Prostate gland (tissue), 2 donors: ENCODE measurements at regions of chr4 and their contacts with region 1.

Region 1: GRCh38 chr4:185471235-185472102 is at the start of gene CCDC110:
- DNase-seq: peak; percentile 95
- H3K4me3 ChIP-seq: peak within 1 kb of the TSS; percentile 63 to 70
- H3K27ac ChIP-seq: peak within 1 kb of the TSS; percentile 74 to 81
- H3K4me1 ChIP-seq: no peaks in the 10 kb centered on the region
- H3K27me3 ChIP-seq: no peaks in the 10 kb centered on the region
- CTCF ChIP-seq: peak; percentile 70 to 85 (median 75)
- POLR2A ChIP-seq: peak; percentile 42
- total RNA-seq, gene CCDC110: 2.8 to 10.3 TPM

Region 2: DNA sequence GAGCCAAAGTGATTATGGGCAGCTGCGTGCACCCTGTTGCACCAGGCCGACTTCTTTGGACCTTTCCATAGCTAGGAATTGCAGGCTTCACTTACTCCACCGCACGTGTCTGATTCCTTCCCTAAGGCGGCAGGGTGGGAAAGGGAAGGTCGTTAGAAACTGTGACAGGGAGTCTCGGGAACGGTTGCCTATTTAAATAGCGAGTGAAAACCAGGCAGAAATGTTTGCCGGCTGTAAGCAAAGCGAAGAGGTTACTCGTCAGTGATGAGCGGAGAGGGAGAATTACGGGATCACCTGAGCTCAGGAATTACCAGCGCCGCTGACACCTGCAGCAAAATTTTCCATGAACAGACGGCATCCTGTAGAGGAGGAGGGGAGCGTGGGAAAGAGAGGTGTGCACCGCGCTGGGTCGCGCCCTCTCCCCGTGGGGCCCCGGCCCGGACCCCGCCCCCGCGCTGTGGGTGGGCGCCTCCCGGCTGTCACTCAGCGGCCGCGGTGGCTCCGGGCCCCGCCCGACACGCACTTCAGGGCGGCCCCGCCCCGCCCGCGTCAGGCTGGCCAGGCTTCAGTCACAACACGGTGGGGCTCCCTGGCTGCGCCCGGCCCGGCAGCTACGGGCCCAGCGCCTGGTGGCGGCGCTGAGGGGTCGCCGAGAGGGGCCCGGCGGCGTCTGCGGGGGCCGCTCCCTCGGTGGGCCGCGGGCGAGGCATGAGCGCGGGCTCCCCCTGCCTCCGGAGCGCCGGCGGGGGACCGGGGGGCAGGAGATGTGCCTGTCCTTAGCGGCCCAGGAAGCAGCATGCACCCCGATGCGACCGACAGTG is 262.2 kb before region 1 on chr4 and contains the start of gene SNX25:
- intact Hi-C with region 1: loop called (anchors 5 kb)
- DNase-seq: peak; percentile 89
- H3K4me3 ChIP-seq: peak within 1 kb of the TSS; percentile 82
- H3K27ac ChIP-seq: peak within 1 kb of the TSS; percentile 85 to 95
- H3K4me1 ChIP-seq: peaks cover 7% of the 10 kb centered on the region
- H3K27me3 ChIP-seq: no peaks in the 10 kb centered on the region
- CTCF ChIP-seq: peak in 3 of 4 experiments; percentile 11 to 54 (median 52)
- POLR2A ChIP-seq: peak; percentile 96
- total RNA-seq, gene SNX25: 26.4 to 49.5 TPM

Region 3: DNA sequence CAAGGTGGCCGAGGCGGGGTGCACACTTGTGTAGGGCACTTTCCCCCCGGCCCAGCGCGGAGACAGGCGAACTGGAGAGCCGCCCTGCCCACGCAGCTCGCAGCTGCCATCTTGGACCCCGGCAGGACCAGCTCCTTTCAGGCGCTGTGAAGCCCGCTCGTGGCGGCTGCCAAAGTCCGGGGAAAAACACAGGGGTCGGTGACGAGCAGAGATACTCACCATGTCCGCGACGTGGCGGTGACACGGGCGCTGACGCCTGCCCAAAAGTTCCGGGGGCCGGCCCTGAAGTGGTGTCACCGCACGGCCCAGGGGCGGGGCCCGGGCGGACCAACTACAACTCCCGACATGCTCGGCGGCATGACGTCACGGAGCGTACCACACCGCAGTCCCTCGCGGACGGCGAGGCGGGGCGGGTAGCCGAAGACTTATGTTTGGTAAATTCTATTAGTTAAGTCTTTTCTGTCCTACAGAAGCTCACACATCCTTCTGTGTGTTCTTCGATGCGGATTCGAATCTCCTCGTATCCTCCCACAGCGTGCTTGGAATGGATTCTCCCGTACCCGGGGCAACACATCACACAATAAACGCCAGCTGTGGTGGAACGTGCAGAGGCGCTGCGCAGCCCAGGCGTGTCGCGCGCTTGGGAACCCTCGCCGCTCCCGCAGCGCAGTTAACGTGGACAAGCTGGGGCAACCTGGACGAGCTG is 45.7 kb before region 1 on chr4 and contains the start of gene UFSP2:
- intact Hi-C with region 1: loop called (anchors 5 kb)
- DNase-seq: peak; percentile 81
- H3K4me3 ChIP-seq: peak within 1 kb of the TSS; percentile 65 to 76
- H3K27ac ChIP-seq: peak within 1 kb of the TSS; percentile 94 to 95
- H3K4me1 ChIP-seq: no peaks in the 10 kb centered on the region
- H3K27me3 ChIP-seq: no peaks in the 10 kb centered on the region
- CTCF ChIP-seq: peak in 3 of 4 experiments; percentile 5 to 19 (median 8)
- POLR2A ChIP-seq: peak; percentile 64
- total RNA-seq, gene UFSP2: 32.1 to 42.7 TPM

Region 4: GRCh38 chr4:185504098-185505047 is 32.9 kb after region 1 on chr4:
- intact Hi-C with region 1: loop called (anchors 5 kb)
- DNase-seq: peak; percentile 35
- H3K4me3 ChIP-seq: peak overlapping the region in 1 of 2 donors; percentile 1
- H3K27ac ChIP-seq: peak overlapping the region; percentile 26 to 49
- H3K4me1 ChIP-seq: no peaks in the 10 kb centered on the region
- H3K27me3 ChIP-seq: no peaks in the 10 kb centered on the region
- CTCF ChIP-seq: no peak
- POLR2A ChIP-seq: no peak

Region 5: DNA sequence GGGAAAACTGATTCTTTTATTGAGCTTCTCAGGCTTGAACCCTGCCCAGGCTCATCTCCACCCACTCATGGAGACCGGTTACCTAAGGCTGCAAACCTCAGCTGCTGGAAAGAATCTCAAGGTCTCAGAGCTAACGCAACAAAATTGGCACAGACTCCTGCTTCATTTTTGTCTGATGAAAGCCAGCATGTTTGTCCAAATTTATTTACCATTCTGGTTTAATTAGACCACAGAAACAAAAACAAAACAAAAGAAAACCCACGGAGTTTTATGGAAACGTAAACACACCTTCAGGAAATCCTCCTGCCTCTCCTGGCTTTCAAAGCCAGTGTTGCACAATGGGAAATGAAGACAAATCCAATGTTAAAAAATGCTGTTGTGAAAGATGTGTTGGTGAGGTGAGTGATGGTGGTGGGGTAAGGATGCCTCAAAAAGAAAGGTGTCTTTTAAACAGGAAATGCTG is 120.2 kb after region 1 on chr4:
- intact Hi-C with region 1: loop called (anchors 2 kb)
- DNase-seq: peak; percentile 32
- H3K4me3 ChIP-seq: no peak overlapping the region
- H3K27ac ChIP-seq: peak overlapping the region; percentile 40 to 46
- H3K4me1 ChIP-seq: no peaks in the 10 kb centered on the region
- H3K27me3 ChIP-seq: no peaks in the 10 kb centered on the region
- CTCF ChIP-seq: peak in 1 of 4 experiments; percentile 27
- POLR2A ChIP-seq: no peak

Region 6: DNA sequence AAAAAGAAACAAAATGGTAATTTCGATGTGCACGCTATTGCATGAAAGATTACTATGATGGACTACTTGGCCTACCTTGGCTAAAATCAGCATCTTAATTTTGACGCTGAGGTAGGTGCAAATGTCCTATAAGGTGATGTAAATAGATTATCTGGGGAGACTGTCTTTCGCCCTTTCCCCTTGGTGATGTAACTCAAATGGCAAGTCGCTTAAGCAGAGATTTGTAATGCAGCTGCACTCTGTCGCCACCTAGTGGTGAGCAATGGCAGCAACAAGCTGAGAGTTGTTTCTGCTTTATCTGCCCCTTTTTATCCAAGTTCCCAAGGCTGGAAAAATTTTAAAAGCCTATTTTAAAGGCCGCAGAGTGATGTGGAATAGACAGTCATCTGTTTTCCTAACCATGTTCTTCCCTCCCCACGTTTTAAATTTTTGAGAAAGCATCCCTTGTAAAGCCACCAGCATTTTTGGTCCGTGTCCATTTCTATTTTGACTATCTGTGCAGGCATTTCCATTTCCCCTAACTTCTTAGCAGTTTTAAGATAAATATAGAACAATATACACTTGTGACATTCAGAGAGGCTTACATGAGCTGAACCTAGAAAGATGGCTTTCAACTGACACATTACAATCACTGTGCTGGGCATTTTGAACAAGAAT is 126.2 kb after region 1 on chr4:
- intact Hi-C with region 1: loop called (anchors 1 kb)
- DNase-seq: peak; percentile 57
- H3K4me3 ChIP-seq: no peak overlapping the region
- H3K27ac ChIP-seq: no peak overlapping the region
- H3K4me1 ChIP-seq: no peaks in the 10 kb centered on the region
- H3K27me3 ChIP-seq: no peaks in the 10 kb centered on the region
- CTCF ChIP-seq: peak; percentile 93 to 98 (median 96)
- POLR2A ChIP-seq: no peak

Region 7: GRCh38 chr4:186037692-186038658 is 566.5 kb after region 1 on chr4:
- intact Hi-C with region 1: loop called (anchors 5 kb)
- DNase-seq: peak; percentile 67
- H3K4me3 ChIP-seq: no peak overlapping the region
- H3K27ac ChIP-seq: no peak overlapping the region
- H3K4me1 ChIP-seq: peaks cover under 1% of the 10 kb centered on the region
- H3K27me3 ChIP-seq: no peaks in the 10 kb centered on the region
- CTCF ChIP-seq: peak; percentile 74 to 88 (median 82)
- POLR2A ChIP-seq: no peak